ENCODE measurements at regions of chr14 and their contacts with region 1.

Region 1: DNA sequence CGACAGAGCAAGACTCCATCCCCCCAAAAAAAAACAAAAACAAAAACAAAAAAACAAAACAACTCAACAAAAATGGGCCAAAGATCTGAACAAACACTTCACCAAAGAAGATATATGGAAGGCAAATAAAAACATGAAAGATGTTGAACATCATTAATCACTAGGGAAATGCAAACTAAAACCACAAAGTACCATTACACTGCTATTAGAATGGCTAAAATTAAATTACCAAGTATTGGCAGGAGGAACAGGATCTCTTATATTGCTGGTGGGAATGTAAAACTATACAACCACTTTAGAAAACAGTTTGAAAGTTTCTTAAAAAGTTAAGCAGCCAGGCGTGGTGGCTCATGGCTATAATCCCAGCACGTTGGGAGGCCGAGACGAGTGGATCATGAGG is 12.9 kb downstream of the SOS2 start:
- DNase-seq: no peak
- H3K4me3 ChIP-seq: no peak overlapping the region
- H3K27ac ChIP-seq: no peak overlapping the region
- H3K4me1 ChIP-seq: peaks cover 0 to 2% (median 0%) of the 10 kb centered on the region in 4 experiments
- H3K27me3 ChIP-seq: no peaks in the 10 kb centered on the region

Region 2: GRCh38 chr14:50260511-50260910 is 42.0 kb after region 1 on chr14:
- CTCF ChIA-PET with region 1: interaction called, 10 read pairs
- POLR2A ChIA-PET with region 1: no interaction called
- DNase-seq: peak; percentile 46 to 67 (median 58)
- H3K4me3 ChIP-seq: no peak overlapping the region
- H3K27ac ChIP-seq: no peak overlapping the region
- H3K4me1 ChIP-seq: no peaks in the 10 kb centered on the region
- H3K27me3 ChIP-seq: no peaks in the 10 kb centered on the region

Region 3: GRCh38 chr14:50272503-50272902 is 54.0 kb after region 1 on chr14:
- CTCF ChIA-PET with region 1: no interaction called
- POLR2A ChIA-PET with region 1: no interaction called
- DNase-seq: no peak
- H3K4me3 ChIP-seq: no peak overlapping the region
- H3K27ac ChIP-seq: no peak overlapping the region
- H3K4me1 ChIP-seq: no peaks in the 10 kb centered on the region
- H3K27me3 ChIP-seq: no peaks in the 10 kb centered on the region

Measured in common myeloid progenitor, CD34-positive (primary cell).